PC-3 (cell line): ENCODE measurements at regions of chr15 and their contacts with region 1.

Region 1: GRCh38 chr15:82809404-82810060 is at the start of gene WHAMM:
- DNase-seq: peak; percentile 98
- ATAC-seq: peak; percentile 89
- H3K4me3 ChIP-seq: peak within 1 kb of the TSS; percentile 90
- H3K27ac ChIP-seq: peak within 1 kb of the TSS; percentile 75
- H3K4me1 ChIP-seq: peaks cover 16% of the 10 kb centered on the region
- H3K27me3 ChIP-seq: no peaks in the 10 kb centered on the region
- CTCF ChIP-seq: no peak
- total RNA-seq, gene WHAMM: 4.5 and 4.6 TPM in 2 replicates

Region 2: GRCh38 chr15:82946155-82946701 is 136.7 kb after region 1 on chr15:
- CTCF ChIA-PET with region 1: no interaction called
- POLR2A ChIA-PET with region 1: interaction called, 10 read pairs
- intact Hi-C with region 1: no loop called
- DNase-seq: no peak
- ATAC-seq: no peak
- H3K4me3 ChIP-seq: no peak overlapping the region
- H3K27ac ChIP-seq: no peak overlapping the region
- H3K4me1 ChIP-seq: peaks cover 37% of the 10 kb centered on the region
- H3K27me3 ChIP-seq: no peaks in the 10 kb centered on the region
- CTCF ChIP-seq: no peak

Region 3: DNA sequence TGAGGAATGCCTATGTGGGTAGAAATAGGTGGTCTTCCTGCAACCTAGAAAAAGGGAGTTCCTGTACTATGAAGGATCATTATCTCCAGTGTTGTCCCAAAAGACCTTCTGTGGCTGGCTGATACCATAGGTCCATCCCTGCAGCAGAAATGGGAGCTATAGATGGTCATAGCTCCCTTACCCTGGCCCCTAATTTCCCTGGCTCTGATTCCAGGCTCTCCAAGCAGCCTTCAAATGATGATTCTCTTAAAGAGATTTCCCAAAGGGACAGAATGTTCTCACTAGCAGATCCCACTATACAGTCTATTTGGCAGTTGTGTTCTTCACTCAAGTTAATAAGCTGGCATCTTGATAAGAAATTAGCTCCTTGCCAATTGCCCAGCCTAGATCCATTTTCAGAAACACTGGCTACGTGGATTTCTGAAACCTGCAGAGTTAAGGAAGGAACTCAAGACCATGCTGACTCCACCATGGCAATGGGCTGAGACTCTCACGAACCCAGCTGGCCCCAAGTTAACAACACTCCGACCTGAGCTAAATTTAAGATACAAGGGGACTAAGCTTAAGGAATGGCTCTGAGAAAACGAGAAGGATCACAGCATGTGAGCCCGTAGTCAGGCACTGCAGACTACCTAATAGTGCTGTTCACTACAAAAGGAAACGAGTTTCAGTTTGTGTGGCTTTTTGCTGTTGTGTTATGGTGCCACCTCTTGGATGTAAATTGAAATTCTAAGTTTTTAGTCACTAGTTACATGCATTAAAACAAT is 190.6 kb after region 1 on chr15:
- CTCF ChIA-PET with region 1: no interaction called
- POLR2A ChIA-PET with region 1: no interaction called
- intact Hi-C with region 1: no loop called
- DNase-seq: peak; percentile 75
- ATAC-seq: peak; percentile 81
- H3K4me3 ChIP-seq: peak overlapping the region; percentile 56
- H3K27ac ChIP-seq: no peak overlapping the region
- H3K4me1 ChIP-seq: no peaks in the 10 kb centered on the region
- H3K27me3 ChIP-seq: no peaks in the 10 kb centered on the region
- CTCF ChIP-seq: peak; percentile 79